Endothelial cell of umbilical vein (primary cell): ENCODE measurements at regions of chrX and their contacts with region 1.

Region 1: GRCh38 chrX:34578237-34578636 is 78.8 kb downstream of the TMEM47 start:
- DNase-seq: peak; percentile 59
- H3K4me3 ChIP-seq: no peak overlapping the region
- H3K27ac ChIP-seq: no peak overlapping the region
- H3K4me1 ChIP-seq: no peaks in the 10 kb centered on the region
- H3K27me3 ChIP-seq: no peaks in the 10 kb centered on the region
- CTCF ChIP-seq: peak in 1 of 2 donors; percentile 10
- POLR2A ChIP-seq: no peak

Region 2: GRCh38 chrX:34365482-34365881 is 212.8 kb before region 1 on chrX:
- CTCF ChIA-PET with region 1: interaction called, 4 read pairs
- POLR2A ChIA-PET with region 1: no interaction called
- dilution Hi-C with region 1: no loop called
- intact Hi-C with region 1: loop called (anchors 1 kb)
- DNase-seq: peak; percentile 65
- H3K4me3 ChIP-seq: no peak overlapping the region
- H3K27ac ChIP-seq: no peak overlapping the region
- H3K4me1 ChIP-seq: no peaks in the 10 kb centered on the region
- H3K27me3 ChIP-seq: no peaks in the 10 kb centered on the region
- CTCF ChIP-seq: peak; percentile 35
- POLR2A ChIP-seq: no peak

Region 3: GRCh38 chrX:34521563-34521962 is 56.7 kb before region 1 on chrX:
- CTCF ChIA-PET with region 1: interaction called, 23 read pairs
- POLR2A ChIA-PET with region 1: no interaction called
- dilution Hi-C with region 1: no loop called
- intact Hi-C with region 1: no loop called
- DNase-seq: peak; percentile 51
- H3K4me3 ChIP-seq: no peak overlapping the region
- H3K27ac ChIP-seq: no peak overlapping the region
- H3K4me1 ChIP-seq: no peaks in the 10 kb centered on the region
- H3K27me3 ChIP-seq: no peaks in the 10 kb centered on the region
- CTCF ChIP-seq: peak in 1 of 2 donors; percentile 8
- POLR2A ChIP-seq: no peak

Region 4: GRCh38 chrX:34875204-34875603 is 297.0 kb after region 1 on chrX:
- CTCF ChIA-PET with region 1: no interaction called
- POLR2A ChIA-PET with region 1: no interaction called
- dilution Hi-C with region 1: no loop called
- intact Hi-C with region 1: no loop called
- DNase-seq: peak; percentile 1
- H3K4me3 ChIP-seq: no peak overlapping the region
- H3K27ac ChIP-seq: no peak overlapping the region
- H3K4me1 ChIP-seq: no peaks in the 10 kb centered on the region
- H3K27me3 ChIP-seq: no peaks in the 10 kb centered on the region
- CTCF ChIP-seq: no peak
- POLR2A ChIP-seq: no peak

Region 5: DNA sequence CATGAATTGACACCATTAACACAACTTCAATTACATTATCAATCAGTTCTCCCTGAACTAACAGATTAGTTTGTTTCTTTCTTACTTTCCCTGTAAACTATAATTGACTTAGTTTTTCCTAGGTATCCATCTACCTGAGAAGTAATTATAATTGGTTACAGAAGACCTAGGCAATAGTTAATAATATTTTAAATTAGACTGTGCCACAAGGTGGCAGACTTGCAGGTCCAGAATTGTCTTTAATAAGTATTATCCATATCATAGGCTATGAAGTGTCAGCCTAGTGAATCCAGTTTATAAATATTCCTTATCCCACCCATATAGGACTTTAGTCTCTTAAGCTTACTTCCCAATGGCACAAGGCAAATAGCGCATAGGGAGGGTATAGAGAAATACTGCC is 315.5 kb after region 1 on chrX:
- CTCF ChIA-PET with region 1: no interaction called
- POLR2A ChIA-PET with region 1: no interaction called
- dilution Hi-C with region 1: no loop called
- intact Hi-C with region 1: loop called (anchors 5 kb)
- DNase-seq: peak; percentile 9
- H3K4me3 ChIP-seq: no peak overlapping the region
- H3K27ac ChIP-seq: no peak overlapping the region
- H3K4me1 ChIP-seq: no peaks in the 10 kb centered on the region
- H3K27me3 ChIP-seq: no peaks in the 10 kb centered on the region
- CTCF ChIP-seq: no peak
- POLR2A ChIP-seq: no peak

Region 6: DNA sequence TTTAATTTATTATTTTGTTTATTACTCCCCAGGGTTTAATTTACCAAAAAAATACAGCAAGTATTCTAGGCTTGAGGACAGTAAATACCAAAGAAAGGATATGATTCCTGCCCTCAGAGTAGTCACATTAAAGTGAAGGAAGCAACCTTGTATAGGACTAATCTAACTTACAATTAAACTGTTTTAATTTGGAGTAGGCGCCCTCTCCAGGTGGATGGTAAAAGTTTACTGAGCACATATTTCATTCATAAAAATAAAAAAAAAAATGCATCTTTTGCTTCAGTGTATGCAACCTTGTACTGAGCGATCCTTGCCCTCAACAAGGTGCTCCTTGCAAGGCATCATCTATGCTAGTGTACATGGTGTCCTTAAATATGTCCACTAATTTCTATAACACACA is 1147.9 kb after region 1 on chrX:
- CTCF ChIA-PET with region 1: no interaction called
- POLR2A ChIA-PET with region 1: no interaction called
- dilution Hi-C with region 1: no loop called
- intact Hi-C with region 1: loop called (anchors 5 kb)
- DNase-seq: peak; percentile 3
- H3K4me3 ChIP-seq: no peak overlapping the region
- H3K27ac ChIP-seq: no peak overlapping the region
- H3K4me1 ChIP-seq: no peaks in the 10 kb centered on the region
- H3K27me3 ChIP-seq: no peaks in the 10 kb centered on the region
- CTCF ChIP-seq: peak in 1 of 2 donors; percentile 7
- POLR2A ChIP-seq: no peak